OCI-LY7 (cell line): ENCODE measurements at regions of chr3 and their contacts with region 1.

Region 1: GRCh38 chr3:113495035-113495434 is 19.9 kb downstream of the SPICE1 start:
- DNase-seq: peak; percentile 55
- H3K4me3 ChIP-seq: no peak overlapping the region
- H3K27ac ChIP-seq: no peak overlapping the region
- H3K4me1 ChIP-seq: no peaks in the 10 kb centered on the region
- CTCF ChIP-seq: peak; percentile 85

Region 2: GRCh38 chr3:113514265-113514769 is 19.3 kb after region 1 on chr3:
- CTCF ChIA-PET with region 1: interaction called, 4 read pairs
- POLR2A ChIA-PET with region 1: interaction called, 20 read pairs
- intact Hi-C with region 1: loop called (anchors 2 kb)
- DNase-seq: peak; percentile 12
- H3K4me3 ChIP-seq: peak overlapping the region; percentile 88
- H3K27ac ChIP-seq: peak overlapping the region; percentile 71
- H3K4me1 ChIP-seq: peaks cover 17% of the 10 kb centered on the region
- CTCF ChIP-seq: no peak

Region 3: GRCh38 chr3:113575206-113575605 is 80.2 kb after region 1 on chr3:
- CTCF ChIA-PET with region 1: interaction called, 5 read pairs
- POLR2A ChIA-PET with region 1: interaction called, 7 read pairs
- intact Hi-C with region 1: loop called (anchors 1 kb)
- DNase-seq: no peak
- H3K4me3 ChIP-seq: no peak overlapping the region
- H3K27ac ChIP-seq: no peak overlapping the region
- H3K4me1 ChIP-seq: no peaks in the 10 kb centered on the region
- CTCF ChIP-seq: no peak

Region 4: GRCh38 chr3:113736548-113737089 is 241.6 kb after region 1 on chr3:
- CTCF ChIA-PET with region 1: no interaction called
- POLR2A ChIA-PET with region 1: no interaction called
- intact Hi-C with region 1: loop called (anchors 5 kb)
- DNase-seq: peak; percentile 77
- H3K4me3 ChIP-seq: no peak overlapping the region
- H3K27ac ChIP-seq: peak overlapping the region; percentile 59
- H3K4me1 ChIP-seq: peaks cover 49% of the 10 kb centered on the region
- CTCF ChIP-seq: peak; percentile 88

Region 5: DNA sequence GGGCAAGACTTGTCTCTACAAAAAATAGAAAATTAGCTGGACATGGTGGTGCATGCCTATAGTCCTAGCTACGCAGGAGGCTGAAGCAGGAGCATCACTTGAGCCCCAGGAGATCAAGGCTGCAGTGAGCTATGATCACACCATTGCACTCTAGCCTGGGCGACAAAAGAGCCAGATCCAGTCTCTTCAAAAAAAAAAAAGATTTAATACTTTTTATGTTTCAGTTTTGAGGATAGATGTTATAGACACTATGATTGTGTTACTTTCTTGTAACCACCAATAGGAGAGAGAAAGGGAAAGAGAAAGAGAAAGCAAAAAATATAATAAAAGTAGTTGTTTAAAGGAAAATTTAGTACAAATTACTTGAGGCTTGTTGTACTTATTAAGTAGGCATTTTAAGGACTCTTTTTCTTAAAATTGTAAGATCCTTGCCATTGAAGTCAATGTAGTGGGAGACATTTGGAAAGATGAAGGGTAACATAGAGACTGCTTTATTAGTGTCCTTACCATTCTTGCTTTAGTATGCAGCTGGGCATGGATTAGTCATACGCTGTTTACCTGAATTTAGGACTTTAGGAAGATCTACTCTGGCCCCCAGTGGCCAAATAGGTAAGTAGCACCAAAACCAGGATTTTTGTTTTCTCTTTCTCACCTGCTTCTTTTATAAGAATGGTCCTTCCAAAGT is 417.7 kb after region 1 on chr3:
- CTCF ChIA-PET with region 1: no interaction called
- POLR2A ChIA-PET with region 1: no interaction called
- intact Hi-C with region 1: loop called (anchors 10 kb)
- DNase-seq: peak; percentile 74
- H3K4me3 ChIP-seq: no peak overlapping the region
- H3K27ac ChIP-seq: no peak overlapping the region
- H3K4me1 ChIP-seq: no peaks in the 10 kb centered on the region
- CTCF ChIP-seq: peak; percentile 85